Adrenal gland (tissue), 19 donors: ENCODE measurements at regions of chr2 and their contacts with region 1.

Region 1: DNA sequence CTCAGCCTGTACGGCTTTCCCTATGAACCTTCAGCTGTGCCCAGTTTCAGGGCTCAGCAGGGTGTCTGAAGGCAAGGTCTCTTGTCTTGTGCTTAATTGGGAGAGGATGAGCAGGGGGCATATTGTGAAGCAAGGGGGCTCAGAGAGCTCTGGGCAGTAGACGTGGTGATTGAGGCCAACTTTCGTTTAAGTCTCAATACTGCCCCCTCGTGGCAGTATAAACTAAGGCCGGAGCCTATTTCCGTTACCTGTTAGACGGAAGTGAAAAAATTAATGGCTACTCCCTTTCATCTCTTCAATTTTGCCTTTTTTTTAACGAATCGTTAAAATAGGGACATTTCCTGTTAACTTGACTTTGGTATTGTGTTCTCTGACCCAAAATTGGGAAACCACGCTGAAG is 193.4 kb downstream of the TDRD15 start:
- DNase-seq: peak; percentile 43 to 82 (median 64)
- H3K4me3 ChIP-seq: no peak overlapping the region
- H3K27ac ChIP-seq: no peak overlapping the region
- H3K4me1 ChIP-seq: peaks cover 0 to 5% of the 10 kb centered on the region in 2 donors
- H3K27me3 ChIP-seq: no peaks in the 10 kb centered on the region
- CTCF ChIP-seq: peak; percentile 63 to 82 (median 76)
- POLR2A ChIP-seq: no peak

Region 2: DNA sequence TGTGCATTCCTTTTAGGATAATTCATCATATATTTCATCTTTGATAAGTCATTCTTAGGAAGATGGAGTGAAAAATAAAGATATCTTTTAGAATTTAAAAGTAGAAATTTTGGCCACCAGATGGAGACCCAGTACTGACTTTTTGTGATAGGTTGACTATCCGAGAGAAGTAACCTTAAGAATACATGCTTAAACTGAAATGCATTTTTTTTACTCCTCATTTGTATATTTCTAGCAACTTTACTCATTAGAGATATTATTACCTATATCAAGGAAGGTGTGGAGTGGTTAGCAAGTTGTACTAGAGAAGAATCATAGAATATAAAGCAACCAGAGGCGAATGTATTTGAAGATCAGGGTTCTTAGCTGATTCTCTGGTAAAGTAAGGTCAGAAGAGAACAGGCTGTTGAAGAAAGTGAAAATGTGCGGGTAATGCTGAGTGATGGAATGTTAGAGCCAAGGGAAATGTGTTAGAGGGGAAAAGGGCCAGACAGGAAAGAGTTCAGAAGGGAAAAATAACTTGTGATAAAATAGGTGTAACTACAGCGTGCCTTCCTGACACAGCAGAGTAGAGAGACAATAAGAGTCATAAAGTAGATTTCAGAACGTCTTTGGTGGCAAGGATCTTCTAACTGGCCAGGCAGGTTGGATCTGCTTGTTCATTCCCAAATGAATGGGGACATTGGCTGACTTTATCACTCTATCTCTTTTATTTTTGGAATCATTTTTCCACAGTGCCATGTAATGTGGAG is 141.1 kb before region 1 on chr2:
- intact Hi-C with region 1: loop called (anchors 2 to 5 kb)
- DNase-seq: peak in 2 of 7 donors; percentile 11 to 17
- H3K4me3 ChIP-seq: peak overlapping the region in 1 of 4 donors; percentile 6
- H3K27ac ChIP-seq: no peak overlapping the region
- H3K4me1 ChIP-seq: no peaks in the 10 kb centered on the region
- H3K27me3 ChIP-seq: no peaks in the 10 kb centered on the region
- CTCF ChIP-seq: peak; percentile 32 to 75 (median 61)
- POLR2A ChIP-seq: no peak

Region 3: GRCh38 chr2:21367421-21367820 is 50.3 kb after region 1 on chr2:
- intact Hi-C with region 1: no loop called
- DNase-seq: no peak
- H3K4me3 ChIP-seq: no peak overlapping the region
- H3K27ac ChIP-seq: no peak overlapping the region
- H3K4me1 ChIP-seq: no peaks in the 10 kb centered on the region
- H3K27me3 ChIP-seq: no peaks in the 10 kb centered on the region
- CTCF ChIP-seq: no peak
- POLR2A ChIP-seq: no peak